MCF 10A (cell line): ENCODE measurements at regions of chr15 and their contacts with region 1.

Region 1: GRCh38 chr15:33021806-33022389 is 172.6 kb downstream of the FMN1 start:
- DNase-seq: peak; percentile 76
- H3K4me3 Mint-ChIP-seq: no peak overlapping the region
- H3K27ac Mint-ChIP-seq: peak overlapping the region; percentile 85
- H3K4me1 Mint-ChIP-seq: peaks cover 10% of the 10 kb centered on the region
- H3K27me3 Mint-ChIP-seq: no peaks in the 10 kb centered on the region
- CTCF ChIP-seq: peak; percentile 43

Region 2: GRCh38 chr15:32899126-32899596 is 122.7 kb before region 1 on chr15:
- CTCF ChIA-PET with region 1: no interaction called
- POLR2A ChIA-PET with region 1: no interaction called
- intact Hi-C with region 1: no loop called
- DNase-seq: peak; percentile 3
- H3K4me3 Mint-ChIP-seq: no peak overlapping the region
- H3K27ac Mint-ChIP-seq: no peak overlapping the region
- H3K4me1 Mint-ChIP-seq: no peaks in the 10 kb centered on the region
- H3K27me3 Mint-ChIP-seq: no peaks in the 10 kb centered on the region
- CTCF ChIP-seq: no peak

Region 3: GRCh38 chr15:33074942-33075341 is 53.0 kb after region 1 on chr15:
- CTCF ChIA-PET with region 1: interaction called, 4 read pairs
- POLR2A ChIA-PET with region 1: no interaction called
- intact Hi-C with region 1: loop called (anchors 2 kb)
- DNase-seq: peak; percentile 34
- H3K4me3 Mint-ChIP-seq: no peak overlapping the region
- H3K27ac Mint-ChIP-seq: no peak overlapping the region
- H3K4me1 Mint-ChIP-seq: no peaks in the 10 kb centered on the region
- H3K27me3 Mint-ChIP-seq: no peaks in the 10 kb centered on the region
- CTCF ChIP-seq: no peak

Region 4: DNA sequence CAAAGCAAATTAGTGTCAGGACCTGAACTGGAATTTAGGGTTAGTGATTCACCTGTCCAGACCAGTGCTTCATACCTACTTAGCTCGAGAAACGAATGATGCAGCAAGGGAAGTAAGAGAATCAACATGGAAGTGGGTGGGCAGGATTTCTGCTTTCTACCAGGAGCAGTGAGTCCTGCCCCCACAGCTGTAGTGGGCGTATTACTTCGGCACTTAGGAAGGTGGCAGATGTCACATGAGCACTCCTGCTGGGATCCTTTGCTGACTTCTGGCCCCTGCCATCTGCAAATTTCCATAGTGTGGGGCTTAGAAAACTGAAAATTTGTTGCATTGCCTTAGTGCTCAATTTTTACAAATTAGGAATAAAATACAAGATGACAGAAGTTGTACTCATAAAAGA is 320.1 kb after region 1 on chr15:
- CTCF ChIA-PET with region 1: no interaction called
- POLR2A ChIA-PET with region 1: no interaction called
- intact Hi-C with region 1: no loop called
- DNase-seq: no peak
- H3K4me3 Mint-ChIP-seq: no peak overlapping the region
- H3K27ac Mint-ChIP-seq: no peak overlapping the region
- H3K4me1 Mint-ChIP-seq: no peaks in the 10 kb centered on the region
- H3K27me3 Mint-ChIP-seq: peaks cover 21% of the 10 kb centered on the region
- CTCF ChIP-seq: no peak